ENCODE measurements at regions of chr5 and their contacts with region 1.

Region 1: GRCh38 chr5:119022017-119022745 is 33.8 kb upstream of the DTWD2 start:
- DNase-seq: peak in 6 of 9 donors; percentile 12 to 60 (median 54)
- ATAC-seq: peak; percentile 67
- H3K4me3 ChIP-seq: no peak overlapping the region
- H3K4me3 Mint-ChIP-seq: no peak overlapping the region
- H3K27ac ChIP-seq: no peak overlapping the region
- H3K27ac Mint-ChIP-seq: peak overlapping the region in 3 of 9 donors; percentile 46 to 60 (median 47)
- H3K4me1 ChIP-seq: no peaks in the 10 kb centered on the region
- H3K4me1 Mint-ChIP-seq: peaks cover 0 to 6% (median 2%) of the 10 kb centered on the region in 7 donors
- H3K27me3 ChIP-seq: no peaks in the 10 kb centered on the region
- H3K27me3 Mint-ChIP-seq: no peaks in the 10 kb centered on the region

Region 2: DNA sequence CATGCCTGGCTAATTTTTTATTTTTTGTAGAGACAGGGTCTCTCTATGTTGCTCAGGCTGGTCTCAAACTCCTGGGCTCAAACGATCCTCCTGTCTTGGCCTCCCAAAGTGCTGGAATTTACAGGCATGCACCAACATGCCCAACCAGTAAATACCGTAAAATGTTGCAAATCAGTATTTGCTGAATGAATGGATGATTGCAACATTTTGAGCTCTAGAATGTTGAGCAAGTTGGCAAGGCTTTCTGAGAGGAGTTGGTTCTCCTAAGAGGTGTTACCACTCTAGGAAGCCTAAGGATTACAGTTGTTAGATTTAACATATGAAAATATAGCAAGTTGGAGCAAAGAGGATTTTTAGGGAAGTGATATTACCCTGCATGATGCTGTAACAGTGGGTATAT is 33.1 kb after region 1 on chr5:
- CTCF ChIA-PET with region 1: no interaction called
- POLR2A ChIA-PET with region 1: no interaction called
- intact Hi-C with region 1: no loop called
- DNase-seq: no peak
- ATAC-seq: no peak
- H3K4me3 ChIP-seq: no peak overlapping the region
- H3K4me3 Mint-ChIP-seq: no peak overlapping the region
- H3K27ac ChIP-seq: no peak overlapping the region
- H3K27ac Mint-ChIP-seq: no peak overlapping the region
- H3K4me1 ChIP-seq: no peaks in the 10 kb centered on the region
- H3K4me1 Mint-ChIP-seq: peaks cover 0 to 2% (median 0%) of the 10 kb centered on the region in 7 donors
- H3K27me3 ChIP-seq: no peaks in the 10 kb centered on the region
- H3K27me3 Mint-ChIP-seq: peaks cover 0 to 6% (median 0%) of the 10 kb centered on the region in 5 donors

Region 3: DNA sequence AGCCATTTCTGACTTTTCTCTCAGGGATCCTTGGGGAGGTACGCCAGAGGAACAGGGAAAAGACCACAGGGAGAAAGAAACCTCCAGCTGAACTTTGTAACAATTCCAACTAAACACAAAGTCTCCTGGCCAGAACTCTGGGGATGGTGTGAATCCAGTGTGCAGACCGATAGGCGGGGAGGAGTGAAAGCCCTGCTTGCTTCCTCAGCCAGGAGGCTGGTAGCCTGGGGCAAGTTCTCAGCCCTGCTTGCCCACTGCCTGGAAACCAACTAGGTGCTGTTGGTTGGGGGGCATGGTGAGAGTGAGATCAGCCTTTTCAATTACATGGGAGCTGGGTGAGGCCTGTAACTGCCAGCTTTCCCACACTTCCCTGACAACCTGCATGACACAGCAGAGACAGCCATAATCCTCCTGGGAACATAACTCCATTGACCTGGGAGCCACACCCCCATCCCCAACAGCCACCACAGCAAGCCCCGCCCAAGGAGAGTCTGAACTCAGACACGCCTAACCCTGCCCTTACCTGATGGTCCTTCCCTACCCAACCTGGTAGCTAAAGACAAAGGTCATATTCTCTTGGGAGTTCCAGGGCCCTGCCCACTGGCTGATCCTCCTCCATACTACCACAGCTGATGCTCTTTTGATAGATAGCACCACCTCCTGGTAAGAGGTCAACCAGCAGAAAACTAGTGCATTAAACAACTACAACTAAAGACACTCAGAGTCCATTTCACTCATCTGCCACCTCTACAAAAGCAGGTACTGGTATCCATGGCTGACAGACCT is 233.6 kb after region 1 on chr5:
- CTCF ChIA-PET with region 1: no interaction called
- POLR2A ChIA-PET with region 1: no interaction called
- intact Hi-C with region 1: loop called in 1 of 2 experiments (anchors 1 kb)
- DNase-seq: no peak
- ATAC-seq: peak; percentile 59
- H3K4me3 ChIP-seq: no peak overlapping the region
- H3K4me3 Mint-ChIP-seq: no peak overlapping the region
- H3K27ac ChIP-seq: no peak overlapping the region
- H3K27ac Mint-ChIP-seq: no peak overlapping the region
- H3K4me1 ChIP-seq: no peaks in the 10 kb centered on the region
- H3K4me1 Mint-ChIP-seq: peaks cover 0 to 5% (median 1%) of the 10 kb centered on the region in 7 donors
- H3K27me3 ChIP-seq: no peaks in the 10 kb centered on the region
- H3K27me3 Mint-ChIP-seq: no peaks in the 10 kb centered on the region

Region 4: GRCh38 chr5:119435436-119436132 is 413.4 kb after region 1 on chr5:
- CTCF ChIA-PET with region 1: interaction called, 13 read pairs
- POLR2A ChIA-PET with region 1: no interaction called
- intact Hi-C with region 1: loop called in 1 of 2 experiments (anchors 1 kb)
- DNase-seq: peak; percentile 49 to 75 (median 64)
- ATAC-seq: peak; percentile 89
- H3K4me3 ChIP-seq: no peak overlapping the region
- H3K4me3 Mint-ChIP-seq: peak overlapping the region in 2 of 10 donors; percentile 9 to 32
- H3K27ac ChIP-seq: no peak overlapping the region
- H3K27ac Mint-ChIP-seq: no peak overlapping the region
- H3K4me1 ChIP-seq: no peaks in the 10 kb centered on the region
- H3K4me1 Mint-ChIP-seq: peaks cover 0 to 25% (median 16%) of the 10 kb centered on the region in 7 donors
- H3K27me3 ChIP-seq: no peaks in the 10 kb centered on the region
- H3K27me3 Mint-ChIP-seq: peaks cover 7 to 30% (median 8%) of the 10 kb centered on the region in 5 donors